ENCODE measurements at regions of chr11 and their contacts with region 1.

Region 1: DNA sequence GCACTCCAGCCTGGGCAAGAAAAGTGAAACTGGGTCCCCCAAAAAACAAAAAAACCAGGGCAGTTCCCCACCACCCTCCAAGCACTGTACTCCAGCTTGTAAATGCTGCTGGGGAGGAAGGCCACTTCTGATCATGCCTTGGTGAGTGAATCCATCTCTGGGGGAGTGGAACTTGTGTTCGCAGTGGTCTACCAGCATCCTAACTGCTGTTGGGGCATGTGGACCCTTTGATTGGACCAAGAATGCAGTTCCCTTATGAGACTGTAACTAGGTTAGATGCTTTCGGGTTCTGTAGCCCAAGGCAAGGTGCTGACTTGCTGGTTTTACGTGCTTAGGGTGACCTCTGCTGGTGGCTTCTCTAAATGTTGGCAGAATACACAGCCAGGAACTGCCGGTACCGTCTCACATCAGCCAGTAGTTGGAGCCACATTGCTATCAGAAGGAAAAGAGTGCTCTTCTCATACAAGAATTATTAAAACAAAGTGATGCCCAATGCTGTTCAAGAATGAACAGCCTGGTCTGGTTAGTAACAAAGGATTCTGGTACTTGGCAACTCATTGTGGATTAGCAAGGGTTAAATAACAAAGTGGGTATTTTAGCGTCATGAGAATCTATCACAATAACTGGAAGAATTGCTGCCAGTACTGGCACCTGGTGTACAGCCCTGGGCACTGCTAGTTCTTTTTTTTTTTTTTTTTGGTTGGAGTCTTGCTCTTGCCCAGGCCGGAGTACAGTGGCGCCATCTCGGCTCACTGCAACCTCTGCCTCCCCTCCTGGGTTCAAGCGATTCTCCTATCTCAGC is 13.0 kb downstream of the EIF1AD start:
- DNase-seq: peak; percentile 93 to 96
- H3K4me3 ChIP-seq: no peak overlapping the region
- CTCF ChIP-seq: peak in 1 of 3 donors; percentile 97
- POLR2A ChIP-seq: no peak

Region 2: DNA sequence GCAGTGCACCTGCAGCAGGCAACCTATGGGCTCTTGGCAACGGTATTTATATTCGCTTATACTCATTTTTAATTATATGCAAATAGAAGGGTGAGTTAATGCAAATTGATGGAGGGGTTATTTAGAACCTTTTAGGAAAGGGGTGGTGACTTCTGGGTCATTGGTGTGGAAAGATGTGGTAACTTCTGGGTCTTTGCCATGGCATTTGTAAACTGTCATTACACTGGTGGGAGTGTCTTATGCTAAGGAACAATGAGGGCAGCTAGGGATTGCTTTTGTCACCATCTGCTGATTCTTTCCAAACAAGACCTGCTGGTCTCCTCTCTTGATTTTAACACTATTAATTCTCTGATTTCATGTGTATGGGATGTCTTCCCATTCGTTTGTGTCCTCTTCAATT is 288.6 kb before region 1 on chr11:
- intact Hi-C with region 1: loop called (anchors 10 kb)
- DNase-seq: no peak
- H3K4me3 ChIP-seq: no peak overlapping the region
- CTCF ChIP-seq: no peak
- POLR2A ChIP-seq: no peak

Region 3: DNA sequence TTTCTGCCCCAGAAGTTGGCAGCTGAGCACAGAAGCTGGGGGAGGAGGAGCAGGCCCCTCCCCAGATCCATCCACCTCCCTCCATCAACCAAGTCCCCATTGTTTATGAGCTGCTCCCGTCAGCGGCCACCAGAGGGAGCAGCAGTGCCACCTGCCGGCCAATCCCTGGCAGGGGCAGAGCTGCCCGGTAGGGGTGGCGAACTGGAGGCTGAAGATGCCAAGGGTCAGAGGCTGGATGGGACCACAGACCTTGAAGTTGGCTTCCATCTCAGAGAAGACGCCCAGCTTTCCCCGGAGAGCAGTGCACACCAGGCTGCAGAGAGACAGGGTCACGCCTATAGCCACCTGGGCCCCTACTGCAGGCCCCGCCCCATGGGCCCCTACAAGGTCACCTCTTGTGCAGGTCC is 104.3 kb before region 1 on chr11:
- intact Hi-C with region 1: loop called (anchors 5 kb)
- DNase-seq: peak; percentile 56 to 95
- H3K4me3 ChIP-seq: no peak overlapping the region
- CTCF ChIP-seq: peak in 1 of 3 donors; percentile 96
- POLR2A ChIP-seq: no peak

Measured in lower leg skin (tissue), 4 donors.